Posterior vena cava (tissue), 2 donors: ENCODE measurements at regions of chr17 and their contacts with region 1.

Region 1: DNA sequence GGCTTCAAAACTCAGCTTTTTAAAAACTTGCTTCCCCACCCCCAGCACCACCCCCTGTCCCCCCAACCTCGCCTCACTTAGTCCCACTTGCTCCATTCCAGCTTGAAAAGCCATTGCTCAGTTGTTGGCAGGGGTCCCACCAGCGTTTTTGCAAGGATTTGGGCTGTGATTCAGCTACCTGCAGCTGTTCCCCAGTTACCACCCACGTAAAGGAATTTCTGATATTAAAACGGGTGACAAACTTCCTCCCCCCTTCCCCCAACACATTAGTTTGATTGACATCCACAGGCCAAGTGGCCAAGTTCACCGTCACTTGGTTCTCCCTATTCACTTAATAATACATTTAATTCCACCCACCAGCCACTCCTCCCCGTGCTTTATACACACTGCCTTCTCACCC is 55.0 kb downstream of the SOX9 start:
- DNase-seq: no peak

Region 2: DNA sequence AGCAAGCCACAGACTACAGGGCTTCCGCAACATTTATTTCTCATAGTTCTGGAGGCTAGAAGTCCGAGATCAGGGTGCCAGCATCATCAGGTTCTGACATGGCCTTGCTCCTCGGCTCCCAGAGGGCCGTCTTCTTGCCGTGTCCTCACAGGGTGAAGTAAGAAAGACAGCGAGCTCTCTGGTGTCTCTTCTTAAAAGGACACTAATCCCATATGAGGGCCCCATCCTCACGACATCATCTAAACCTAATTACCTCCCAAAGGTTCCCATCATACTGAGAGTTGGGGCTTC is 828.4 kb after region 1 on chr17:
- intact Hi-C with region 1: loop called in 1 of 2 experiments (anchors 5 kb)
- DNase-seq: no peak